Posterior vena cava (tissue), 2 donors: ENCODE measurements at regions of chr16 and their contacts with region 1.

Region 1: GRCh38 chr16:57757326-57757786 is 21.8 kb downstream of the KATNB1 start:
- DNase-seq: peak; percentile 97

Region 2: GRCh38 chr16:57795431-57795878 is 38.1 kb after region 1 on chr16:
- intact Hi-C with region 1: loop called in 1 of 2 experiments (anchors 1 kb)
- DNase-seq: no peak

Region 3: GRCh38 chr16:57863434-57864160 is 106.2 kb after region 1 on chr16:
- intact Hi-C with region 1: loop called (anchors 5 kb)
- DNase-seq: peak; percentile 88

Region 4: DNA sequence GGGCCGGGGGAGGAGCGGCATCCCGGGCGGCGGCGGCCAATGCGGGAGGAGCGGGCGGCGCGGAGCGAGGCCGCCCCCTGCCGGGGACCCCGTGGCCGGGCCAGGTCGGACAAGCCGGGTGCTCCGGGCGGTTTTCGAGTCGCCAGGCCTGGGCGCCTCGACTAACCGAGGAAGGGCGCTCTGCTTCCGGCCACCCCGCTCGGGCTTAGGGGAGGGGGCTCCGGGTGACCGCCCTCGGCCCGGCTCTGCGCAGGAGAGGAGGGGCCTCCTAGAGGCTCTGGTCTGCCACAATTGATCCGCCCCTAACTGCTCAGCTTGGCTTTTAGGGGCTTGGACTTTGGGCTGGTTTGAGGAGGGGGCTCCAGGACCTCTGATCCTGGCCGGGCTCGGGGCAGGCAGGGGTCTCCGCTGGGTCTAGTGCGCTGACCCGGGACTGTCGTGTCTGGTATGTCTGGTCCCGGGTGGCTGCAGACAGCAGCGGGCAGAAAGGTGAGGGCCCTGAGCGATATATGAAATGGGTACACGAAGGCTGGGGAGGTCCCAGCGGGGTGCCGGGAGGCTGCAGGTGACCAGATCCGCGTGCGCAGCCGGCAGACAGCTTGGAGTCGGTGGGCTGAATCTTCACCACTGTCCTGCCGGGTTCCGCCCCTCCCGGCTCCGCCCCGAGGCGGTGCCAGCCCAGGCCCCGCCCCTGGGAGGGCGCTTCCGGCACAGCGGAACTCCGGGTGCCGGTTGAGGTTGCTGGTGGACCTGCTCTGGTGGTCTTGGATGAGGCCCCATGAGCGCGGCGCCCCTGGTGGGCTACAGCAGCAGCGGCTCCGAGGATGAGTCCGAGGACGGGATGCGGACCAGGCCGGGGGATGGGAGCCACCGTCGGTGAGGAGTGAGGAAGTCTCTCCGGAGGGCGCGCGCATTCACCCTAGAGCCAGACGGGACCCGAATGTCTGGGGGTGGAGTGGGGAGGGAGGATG is 243.6 kb after region 1 on chr16 and contains the start of gene USB1:
- intact Hi-C with region 1: loop called (anchors 10 kb)
- DNase-seq: peak; percentile 97
- total RNA-seq, gene USB1: 34.1 to 39.0 TPM